Activated CD4-positive, alpha-beta memory T cell treated with anti-CD3 and anti-CD28 coated beads, Interleukin-2, amount 10 ng/mL, durations not matched to agents 7 days and 5 days (primary cell): ENCODE measurements at regions of chr7 and their contacts with region 1.

Region 1: DNA sequence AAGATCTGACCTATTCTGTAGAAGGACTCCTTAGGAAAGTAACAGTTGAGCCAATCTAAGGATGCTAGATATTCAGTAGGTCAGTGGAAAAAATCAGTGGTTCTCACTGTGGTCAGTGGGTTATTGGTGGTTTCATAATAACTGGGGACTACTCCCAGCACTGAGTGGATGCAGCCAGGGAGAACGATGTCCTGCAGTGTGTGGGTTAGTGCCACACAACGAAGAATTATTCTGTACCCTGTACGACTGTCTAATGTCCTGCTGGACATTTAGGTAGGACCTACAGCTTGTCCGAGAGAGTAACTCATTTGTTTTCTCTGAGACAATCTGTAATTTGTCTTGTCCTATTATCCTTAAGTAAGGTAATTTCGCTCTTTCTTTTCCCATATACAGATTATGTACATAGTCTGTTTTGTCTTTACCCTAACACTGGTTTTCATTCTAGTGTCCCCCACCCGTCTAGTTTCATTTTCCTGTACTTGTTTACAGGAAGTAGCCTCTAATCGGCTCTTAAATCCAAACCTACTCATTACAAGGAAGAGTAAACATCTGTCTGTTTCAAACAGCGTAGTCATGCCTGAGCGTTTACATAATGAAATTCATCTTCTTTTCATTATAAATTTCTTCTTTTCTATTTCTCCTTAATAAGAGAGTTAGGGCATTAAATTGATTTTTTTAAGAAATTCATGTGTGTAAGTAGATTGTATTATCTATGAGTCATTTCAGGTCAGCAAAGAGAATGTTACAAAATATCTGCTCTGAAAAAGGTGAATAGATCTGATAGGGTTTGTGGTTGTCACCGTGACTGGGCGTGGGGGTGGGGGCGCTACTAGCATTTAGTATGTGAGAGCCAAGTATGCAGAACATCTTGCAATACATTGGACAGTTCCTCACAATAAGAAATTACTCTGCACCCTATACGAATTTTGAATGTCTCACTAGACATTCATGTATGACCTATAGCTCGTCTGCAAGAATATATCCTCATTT is 8.3 kb upstream of the ZC3HAV1L start:
- DNase-seq: peak; percentile 85
- H3K4me3 Mint-ChIP-seq: peak overlapping the region; percentile 58
- H3K27ac Mint-ChIP-seq: peak overlapping the region; percentile 80
- H3K4me1 Mint-ChIP-seq: peaks cover 78% of the 10 kb centered on the region
- H3K27me3 Mint-ChIP-seq: peaks cover 2% of the 10 kb centered on the region

Region 2: GRCh38 chr7:139058943-139059342 is 14.8 kb after region 1 on chr7:
- CTCF ChIA-PET with region 1: interaction called, 6 read pairs
- POLR2A ChIA-PET with region 1: interaction called, 171 read pairs
- DNase-seq: no peak
- H3K4me3 Mint-ChIP-seq: no peak overlapping the region
- H3K27ac Mint-ChIP-seq: peak overlapping the region; percentile 53
- H3K4me1 Mint-ChIP-seq: peaks cover 62% of the 10 kb centered on the region
- H3K27me3 Mint-ChIP-seq: no peaks in the 10 kb centered on the region

Region 3: GRCh38 chr7:139180700-139181311 is 136.7 kb after region 1 on chr7:
- CTCF ChIA-PET with region 1: no interaction called
- POLR2A ChIA-PET with region 1: no interaction called
- DNase-seq: no peak
- H3K4me3 Mint-ChIP-seq: no peak overlapping the region
- H3K27ac Mint-ChIP-seq: no peak overlapping the region
- H3K4me1 Mint-ChIP-seq: peaks cover 6% of the 10 kb centered on the region
- H3K27me3 Mint-ChIP-seq: no peaks in the 10 kb centered on the region